Caco-2 (cell line): ENCODE measurements at regions of chr11 and their contacts with region 1.

Region 1: DNA sequence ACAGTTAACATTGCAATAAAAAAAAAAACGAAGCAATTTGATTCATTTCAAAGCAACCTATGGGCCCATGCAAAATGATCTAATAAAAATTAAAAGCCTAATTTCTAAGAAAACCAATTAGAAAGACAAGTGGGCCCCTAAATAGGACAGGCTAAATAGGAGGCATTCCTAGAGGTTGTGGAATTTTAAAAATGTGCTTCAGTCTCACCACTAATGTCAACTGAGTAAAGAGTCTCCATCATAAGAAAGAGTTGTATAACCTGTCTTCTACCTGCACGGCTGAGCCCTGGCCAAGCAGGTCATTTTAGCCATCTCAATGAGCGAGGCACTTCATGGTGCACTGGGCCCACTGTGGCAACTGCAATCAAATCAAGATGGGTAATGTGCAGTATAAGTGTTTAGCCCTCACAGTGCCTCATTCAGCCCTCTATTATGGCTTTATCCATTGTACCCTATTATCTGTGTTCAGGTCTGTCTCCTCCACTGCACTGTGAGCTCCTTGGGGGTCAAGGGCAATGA is 76.4 kb downstream of the PRSS23 start:
- DNase-seq: peak; percentile 65 to 71
- H3K4me3 ChIP-seq: no peak overlapping the region
- H3K4me3 Mint-ChIP-seq: no peak overlapping the region
- H3K27ac Mint-ChIP-seq: peak overlapping the region; percentile 1
- H3K4me1 ChIP-seq: peaks cover 22% of the 10 kb centered on the region
- H3K4me1 Mint-ChIP-seq: peaks cover 7% of the 10 kb centered on the region
- H3K27me3 ChIP-seq: no peaks in the 10 kb centered on the region
- H3K27me3 Mint-ChIP-seq: no peaks in the 10 kb centered on the region
- CTCF ChIP-seq: no peak

Region 2: GRCh38 chr11:86848132-86848531 is 28.6 kb before region 1 on chr11:
- CTCF ChIA-PET with region 1: no interaction called
- POLR2A ChIA-PET with region 1: no interaction called
- intact Hi-C with region 1: no loop called
- DNase-seq: no peak
- H3K4me3 ChIP-seq: no peak overlapping the region
- H3K4me3 Mint-ChIP-seq: no peak overlapping the region
- H3K27ac Mint-ChIP-seq: peak overlapping the region; percentile 65
- H3K4me1 ChIP-seq: peaks cover 68% of the 10 kb centered on the region
- H3K4me1 Mint-ChIP-seq: peaks cover 60% of the 10 kb centered on the region
- H3K27me3 ChIP-seq: no peaks in the 10 kb centered on the region
- H3K27me3 Mint-ChIP-seq: no peaks in the 10 kb centered on the region
- CTCF ChIP-seq: no peak

Region 3: DNA sequence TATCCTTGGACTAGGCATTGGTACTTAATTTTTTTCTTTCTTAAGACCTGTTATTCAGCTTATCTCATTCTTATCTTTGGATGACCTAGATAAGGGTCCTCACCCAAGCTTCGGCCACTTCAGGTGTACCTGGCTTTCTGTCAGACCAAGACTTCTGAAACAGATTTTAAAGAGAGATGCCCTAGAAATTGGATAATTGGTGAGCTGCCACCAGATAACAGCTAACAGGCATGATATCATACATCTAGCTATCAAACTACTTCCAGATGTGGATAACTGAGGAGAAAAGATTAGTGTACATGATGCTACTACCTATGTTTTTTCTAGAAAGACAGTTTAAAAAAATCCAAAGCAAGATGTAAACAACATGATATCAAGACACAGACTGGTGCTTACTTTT is 25.6 kb after region 1 on chr11:
- CTCF ChIA-PET with region 1: no interaction called
- POLR2A ChIA-PET with region 1: no interaction called
- intact Hi-C with region 1: loop called (anchors 1 kb)
- DNase-seq: peak in 1 of 2 experiments; percentile 42
- H3K4me3 ChIP-seq: no peak overlapping the region
- H3K4me3 Mint-ChIP-seq: no peak overlapping the region
- H3K27ac Mint-ChIP-seq: no peak overlapping the region
- H3K4me1 ChIP-seq: peaks cover 31% of the 10 kb centered on the region
- H3K4me1 Mint-ChIP-seq: peaks cover 38% of the 10 kb centered on the region
- H3K27me3 ChIP-seq: no peaks in the 10 kb centered on the region
- H3K27me3 Mint-ChIP-seq: no peaks in the 10 kb centered on the region
- CTCF ChIP-seq: no peak